Endothelial cell of umbilical vein (primary cell): ENCODE measurements at regions of chr4 and their contacts with region 1.

Region 1: DNA sequence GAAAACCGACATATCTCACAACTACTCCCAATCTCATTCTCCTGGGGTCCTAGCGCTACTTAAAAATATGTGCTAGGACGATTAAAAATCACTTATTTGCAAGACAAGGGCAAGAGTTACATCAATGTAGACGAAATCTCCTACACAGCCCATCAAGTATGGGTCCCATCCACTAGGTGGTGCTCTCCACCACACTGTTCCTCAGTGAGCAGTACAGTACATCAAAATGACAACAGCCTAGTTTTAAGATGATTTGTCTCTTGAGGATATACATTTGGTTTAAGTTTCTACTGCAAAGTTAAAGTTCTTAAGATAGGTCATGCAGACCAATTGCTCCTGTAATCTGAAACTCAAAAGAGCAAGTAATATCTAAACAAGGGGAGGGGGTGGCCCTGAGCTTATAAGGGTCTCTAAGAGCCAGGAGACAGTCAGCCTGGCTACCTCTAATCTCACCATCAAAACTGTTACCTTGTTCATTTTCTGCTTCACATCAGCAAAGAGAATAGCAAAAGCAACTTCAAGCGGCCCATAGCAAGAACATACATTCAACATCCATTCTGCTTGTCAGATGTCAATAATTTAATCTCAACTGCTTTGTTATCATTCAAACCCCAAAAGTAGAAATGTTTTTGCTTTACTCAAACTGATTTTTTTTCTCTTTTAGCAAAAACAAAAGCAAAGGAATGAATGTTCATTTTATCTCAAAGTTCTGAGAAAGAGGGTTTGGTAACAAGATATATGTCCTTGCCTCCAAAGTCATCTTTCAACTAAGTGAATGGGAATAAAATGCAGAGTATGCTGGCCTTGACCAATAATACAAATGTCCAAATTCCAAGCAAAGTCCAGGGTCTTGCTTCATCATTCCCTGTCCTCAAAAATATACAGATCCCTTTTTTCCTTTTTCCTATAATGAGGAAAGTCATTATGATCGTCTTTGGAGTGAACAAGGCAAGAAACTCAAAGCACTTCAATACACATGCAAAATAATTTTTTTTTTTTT is 53.1 kb downstream of the STX18 start:
- DNase-seq: peak; percentile 86
- H3K4me3 ChIP-seq: no peak overlapping the region
- H3K27ac ChIP-seq: no peak overlapping the region
- H3K4me1 ChIP-seq: peaks cover 14% of the 10 kb centered on the region
- H3K27me3 ChIP-seq: no peaks in the 10 kb centered on the region
- CTCF ChIP-seq: peak; percentile 75 to 92
- POLR2A ChIP-seq: no peak

Region 2: GRCh38 chr4:4477391-4477790 is 11.3 kb before region 1 on chr4:
- CTCF ChIA-PET with region 1: interaction called, 13 read pairs
- POLR2A ChIA-PET with region 1: no interaction called
- dilution Hi-C with region 1: no loop called
- intact Hi-C with region 1: no loop called
- DNase-seq: peak; percentile 5
- H3K4me3 ChIP-seq: no peak overlapping the region
- H3K27ac ChIP-seq: no peak overlapping the region
- H3K4me1 ChIP-seq: peaks cover 6% of the 10 kb centered on the region
- H3K27me3 ChIP-seq: no peaks in the 10 kb centered on the region
- CTCF ChIP-seq: no peak
- POLR2A ChIP-seq: no peak

Region 3: GRCh38 chr4:4519297-4519894 is 30.7 kb after region 1 on chr4:
- CTCF ChIA-PET with region 1: interaction called, 12 read pairs
- POLR2A ChIA-PET with region 1: no interaction called
- dilution Hi-C with region 1: no loop called
- intact Hi-C with region 1: no loop called
- DNase-seq: peak; percentile 42
- H3K4me3 ChIP-seq: no peak overlapping the region
- H3K27ac ChIP-seq: no peak overlapping the region
- H3K4me1 ChIP-seq: peaks cover 5% of the 10 kb centered on the region
- H3K27me3 ChIP-seq: no peaks in the 10 kb centered on the region
- CTCF ChIP-seq: peak; percentile 36 to 61
- POLR2A ChIP-seq: no peak

Region 4: GRCh38 chr4:4575273-4576211 is 86.8 kb after region 1 on chr4:
- CTCF ChIA-PET with region 1: interaction called, 8 read pairs
- POLR2A ChIA-PET with region 1: no interaction called
- dilution Hi-C with region 1: no loop called
- intact Hi-C with region 1: loop called (anchors 1 kb)
- DNase-seq: peak; percentile 64
- H3K4me3 ChIP-seq: peak overlapping the region; percentile 39 to 63 (median 50)
- H3K27ac ChIP-seq: peak overlapping the region; percentile 62
- H3K4me1 ChIP-seq: peaks cover 5% of the 10 kb centered on the region
- H3K27me3 ChIP-seq: no peaks in the 10 kb centered on the region
- CTCF ChIP-seq: peak in 1 of 2 donors; percentile 51
- POLR2A ChIP-seq: peak; percentile 58

Region 5: GRCh38 chr4:4762909-4763821 is 274.5 kb after region 1 on chr4:
- CTCF ChIA-PET with region 1: interaction called, 5 read pairs
- POLR2A ChIA-PET with region 1: no interaction called
- dilution Hi-C with region 1: no loop called
- intact Hi-C with region 1: loop called (anchors 5 kb)
- DNase-seq: no peak
- H3K4me3 ChIP-seq: no peak overlapping the region
- H3K27ac ChIP-seq: no peak overlapping the region
- H3K4me1 ChIP-seq: no peaks in the 10 kb centered on the region
- H3K27me3 ChIP-seq: no peaks in the 10 kb centered on the region
- CTCF ChIP-seq: no peak
- POLR2A ChIP-seq: no peak

Region 6: DNA sequence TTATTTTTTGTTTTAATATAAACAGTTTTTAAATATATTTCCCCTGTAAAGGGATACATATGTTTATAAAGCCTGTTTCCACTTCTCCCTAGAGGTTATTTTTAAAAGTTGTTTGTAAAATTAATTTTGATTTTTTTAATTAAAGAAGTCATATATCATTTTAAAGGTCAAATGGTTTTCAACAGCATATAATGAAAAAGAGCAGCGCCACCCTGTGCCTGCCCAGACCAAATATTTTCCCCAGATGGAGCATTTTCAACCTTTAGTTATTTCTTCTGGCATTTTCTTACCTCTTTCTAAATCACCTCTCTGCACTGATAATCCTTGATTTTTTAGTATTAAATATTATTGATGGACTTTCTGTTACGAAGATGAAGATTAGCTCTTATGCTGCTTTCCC is 391.8 kb after region 1 on chr4:
- CTCF ChIA-PET with region 1: interaction called, 34 read pairs
- POLR2A ChIA-PET with region 1: no interaction called
- dilution Hi-C with region 1: no loop called
- intact Hi-C with region 1: loop called (anchors 1 kb)
- DNase-seq: no peak
- H3K4me3 ChIP-seq: no peak overlapping the region
- H3K27ac ChIP-seq: no peak overlapping the region
- H3K4me1 ChIP-seq: no peaks in the 10 kb centered on the region
- H3K27me3 ChIP-seq: peaks cover 0 to 1% of the 10 kb centered on the region in 2 experiments
- CTCF ChIP-seq: peak in 1 of 2 donors; percentile 8
- POLR2A ChIP-seq: no peak

Region 7: GRCh38 chr4:4995103-4995907 is 506.6 kb after region 1 on chr4:
- CTCF ChIA-PET with region 1: no interaction called
- POLR2A ChIA-PET with region 1: no interaction called
- dilution Hi-C with region 1: no loop called
- intact Hi-C with region 1: loop called (anchors 1 kb)
- DNase-seq: peak; percentile 57
- H3K4me3 ChIP-seq: no peak overlapping the region
- H3K27ac ChIP-seq: no peak overlapping the region
- H3K4me1 ChIP-seq: no peaks in the 10 kb centered on the region
- H3K27me3 ChIP-seq: peaks cover 0 to 5% of the 10 kb centered on the region in 2 experiments
- CTCF ChIP-seq: peak; percentile 91 to 97
- POLR2A ChIP-seq: no peak